ENCODE measurements at regions of chr12 and their contacts with region 1.

Region 1: GRCh38 chr12:43812906-43813305 is 6.8 kb upstream of the TWF1 start:
- DNase-seq: no peak
- H3K4me3 ChIP-seq: no peak overlapping the region
- H3K27ac ChIP-seq: no peak overlapping the region
- H3K4me1 ChIP-seq: peaks cover 2% of the 10 kb centered on the region; the same call in 1 of the 2 replicates
- H3K27me3 ChIP-seq: no peaks in the 10 kb centered on the region
- CTCF ChIP-seq: no peak

Region 2: GRCh38 chr12:43740511-43741100 is 72.3 kb before region 1 on chr12:
- CTCF ChIA-PET with region 1: no interaction called
- POLR2A ChIA-PET with region 1: no interaction called
- intact Hi-C with region 1: no loop called
- DNase-seq: no peak
- H3K4me3 ChIP-seq: no peak overlapping the region
- H3K27ac ChIP-seq: no peak overlapping the region
- H3K4me1 ChIP-seq: no peaks in the 10 kb centered on the region
- H3K27me3 ChIP-seq: no peaks in the 10 kb centered on the region
- CTCF ChIP-seq: no peak

Region 3: DNA sequence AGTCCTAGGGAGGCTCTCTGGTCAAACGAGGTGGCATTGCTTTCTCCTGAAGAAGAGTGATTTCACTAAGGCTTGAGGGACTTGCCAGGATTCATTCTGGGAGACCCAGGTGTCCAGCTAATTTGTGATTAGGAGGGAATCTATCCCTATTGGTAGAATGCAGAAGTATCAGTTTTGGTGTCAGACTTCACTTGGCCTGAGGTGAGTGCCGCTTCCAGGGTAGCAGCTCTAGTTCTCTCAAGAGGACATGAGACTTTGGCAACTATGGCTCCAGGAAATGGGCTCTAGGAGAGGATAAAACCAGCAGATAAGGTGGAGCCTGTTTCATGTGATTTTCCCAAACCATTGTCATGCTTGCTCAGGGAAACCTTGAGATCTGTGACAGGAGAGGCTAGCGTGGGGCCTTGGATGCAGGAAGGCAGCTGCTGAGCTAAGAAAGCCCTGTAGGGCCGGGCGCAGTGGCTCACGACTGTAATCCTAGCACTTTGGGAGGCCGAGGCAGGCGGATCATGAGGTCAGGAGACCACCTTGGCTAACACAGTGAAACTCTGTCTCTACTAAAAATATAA is 11.4 kb after region 1 on chr12:
- CTCF ChIA-PET with region 1: interaction called, 16 read pairs
- POLR2A ChIA-PET with region 1: no interaction called
- intact Hi-C with region 1: no loop called
- DNase-seq: no peak
- H3K4me3 ChIP-seq: no peak overlapping the region
- H3K27ac ChIP-seq: no peak overlapping the region
- H3K4me1 ChIP-seq: no peaks in the 10 kb centered on the region
- H3K27me3 ChIP-seq: no peaks in the 10 kb centered on the region
- CTCF ChIP-seq: no peak

Region 4: DNA sequence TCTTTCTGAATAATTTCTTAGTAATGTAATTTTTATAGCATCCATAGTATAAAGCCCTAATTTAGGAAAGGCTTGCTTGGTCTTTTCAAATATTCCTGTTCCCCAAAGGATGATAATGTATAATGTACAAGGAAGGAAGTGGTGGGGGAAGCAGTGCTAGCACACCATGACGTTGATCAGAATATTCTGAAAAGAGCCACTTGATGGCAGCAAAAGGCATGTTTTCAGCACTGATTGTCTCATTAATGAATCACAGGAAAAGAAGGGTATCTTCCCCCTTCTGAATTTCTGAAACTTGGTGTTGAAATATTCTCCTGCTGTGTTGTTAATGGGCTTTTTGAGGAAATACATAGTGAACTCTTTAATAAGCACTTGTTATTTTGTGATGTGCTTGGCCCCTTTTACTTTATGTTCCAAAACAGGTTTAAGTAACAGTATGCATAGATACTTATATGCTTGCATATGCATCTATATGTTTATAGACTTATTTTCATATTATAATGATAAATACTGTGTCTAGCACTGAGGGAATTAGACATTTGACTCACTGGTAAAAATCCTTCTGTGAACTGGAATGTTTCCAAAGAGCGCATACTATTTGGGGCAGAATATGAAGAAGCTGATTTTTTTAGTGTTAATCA is 144.9 kb after region 1 on chr12:
- CTCF ChIA-PET with region 1: no interaction called
- POLR2A ChIA-PET with region 1: no interaction called
- intact Hi-C with region 1: no loop called
- DNase-seq: peak in 1 of 2 experiments; percentile 10
- H3K4me3 ChIP-seq: no peak overlapping the region
- H3K27ac ChIP-seq: no peak overlapping the region
- H3K4me1 ChIP-seq: no peaks in the 10 kb centered on the region
- H3K27me3 ChIP-seq: no peaks in the 10 kb centered on the region
- CTCF ChIP-seq: peak; percentile 70